H1 (cell line): ENCODE measurements at regions of chr15 and their contacts with region 1.

Region 1: GRCh38 chr15:59725172-59725486 is 36.0 kb upstream of the BNIP2 start:
- DNase-seq: no peak
- H3K4me3 ChIP-seq: no peak overlapping the region
- H3K27ac ChIP-seq: no peak overlapping the region
- H3K4me1 ChIP-seq: no peaks in the 10 kb centered on the region
- H3K27me3 ChIP-seq: no peaks in the 10 kb centered on the region; a peak in 1 of 7 replicates
- CTCF ChIP-seq: no peak
- EP300 ChIP-seq: no peak
- POLR2A ChIP-seq: no peak
- RAD21 ChIP-seq: no peak

Region 2: DNA sequence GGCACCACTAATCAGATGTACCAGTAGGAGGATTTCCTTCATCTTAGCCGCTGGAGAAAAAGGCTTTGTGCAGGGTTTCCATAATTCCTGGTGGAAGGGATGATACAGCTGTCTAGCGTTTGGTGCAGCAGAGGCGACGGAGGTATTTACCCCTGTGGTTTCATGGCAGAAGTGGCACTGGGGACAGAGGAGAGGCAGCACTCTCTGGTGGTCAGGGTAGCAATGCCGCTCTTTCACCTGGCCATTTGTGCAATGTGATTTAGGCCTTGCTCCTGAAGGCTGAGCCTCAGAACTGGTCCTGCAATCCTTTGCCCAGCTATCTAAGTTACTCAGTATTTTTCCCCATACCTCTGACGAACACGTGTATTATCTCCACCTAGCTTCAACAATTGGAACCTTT is 11.1 kb after region 1 on chr15:
- CTCF ChIA-PET with region 1: interaction called, 29 read pairs
- POLR2A ChIA-PET with region 1: no interaction called
- DNase-seq: no peak
- H3K4me3 ChIP-seq: no peak overlapping the region
- H3K27ac ChIP-seq: no peak overlapping the region
- H3K4me1 ChIP-seq: no peaks in the 10 kb centered on the region
- H3K27me3 ChIP-seq: no peaks in the 10 kb centered on the region
- CTCF ChIP-seq: peak; percentile 54 to 63 (median 56)
- EP300 ChIP-seq: no peak
- POLR2A ChIP-seq: no peak
- RAD21 ChIP-seq: peak; percentile 44 to 49

Region 3: DNA sequence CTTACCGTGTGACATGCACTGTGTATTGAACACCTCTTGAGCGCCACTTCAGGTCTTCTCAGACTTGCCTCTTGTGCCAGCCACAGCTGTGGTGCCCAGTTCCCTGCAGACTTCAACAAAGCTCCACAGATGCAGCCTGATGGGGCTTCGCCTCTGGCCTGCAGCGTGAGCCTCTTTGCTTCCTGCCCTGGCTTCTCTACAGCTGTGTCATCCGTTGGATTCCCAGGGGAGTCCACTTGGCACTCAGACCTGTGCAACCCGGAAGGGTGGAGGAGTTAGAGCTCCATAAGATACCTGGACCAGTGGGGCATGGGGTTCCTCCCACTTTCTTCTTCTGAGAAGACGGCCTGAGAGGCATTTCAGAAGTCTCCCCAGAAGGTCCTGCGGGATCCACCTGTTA is 21.6 kb after region 1 on chr15:
- CTCF ChIA-PET with region 1: interaction called, 19 read pairs
- POLR2A ChIA-PET with region 1: no interaction called
- DNase-seq: no peak
- H3K4me3 ChIP-seq: no peak overlapping the region
- H3K27ac ChIP-seq: no peak overlapping the region
- H3K4me1 ChIP-seq: no peaks in the 10 kb centered on the region
- H3K27me3 ChIP-seq: no peaks in the 10 kb centered on the region
- CTCF ChIP-seq: no peak
- EP300 ChIP-seq: no peak
- POLR2A ChIP-seq: no peak
- RAD21 ChIP-seq: no peak

Region 4: DNA sequence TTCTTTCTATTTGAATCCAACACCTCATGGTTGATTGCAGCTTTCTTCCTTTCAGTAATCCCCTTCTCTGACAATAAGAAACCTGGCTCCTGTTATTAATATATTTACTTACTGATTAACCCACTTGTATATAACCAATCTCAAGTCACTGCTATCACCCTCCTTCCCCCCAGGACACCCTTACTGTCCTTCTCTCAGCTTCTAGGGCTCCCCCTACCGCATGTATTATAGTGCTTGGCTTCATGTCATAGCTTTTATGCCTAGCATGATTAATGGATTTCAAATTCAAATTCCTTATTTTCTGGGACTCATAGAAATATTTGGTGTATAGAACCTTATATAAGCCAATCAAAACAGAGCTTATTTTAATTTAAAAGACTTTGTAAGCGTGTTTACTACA is 39.6 kb after region 1 on chr15:
- CTCF ChIA-PET with region 1: interaction called, 11 read pairs
- POLR2A ChIA-PET with region 1: no interaction called
- DNase-seq: no peak
- H3K4me3 ChIP-seq: no peak overlapping the region
- H3K27ac ChIP-seq: no peak overlapping the region
- H3K4me1 ChIP-seq: no peaks in the 10 kb centered on the region; a peak in 2 of 7 replicates
- H3K27me3 ChIP-seq: no peaks in the 10 kb centered on the region
- CTCF ChIP-seq: peak in 2 of 3 experiments; percentile 16 to 19; a peak in 2 of 4 replicates
- EP300 ChIP-seq: no peak
- POLR2A ChIP-seq: no peak
- RAD21 ChIP-seq: peak in 1 of 2 experiments; percentile 25; a peak in 1 of 4 replicates